Endothelial cell of umbilical vein (primary cell): ENCODE measurements at regions of chr17 and their contacts with region 1.

Region 1: DNA sequence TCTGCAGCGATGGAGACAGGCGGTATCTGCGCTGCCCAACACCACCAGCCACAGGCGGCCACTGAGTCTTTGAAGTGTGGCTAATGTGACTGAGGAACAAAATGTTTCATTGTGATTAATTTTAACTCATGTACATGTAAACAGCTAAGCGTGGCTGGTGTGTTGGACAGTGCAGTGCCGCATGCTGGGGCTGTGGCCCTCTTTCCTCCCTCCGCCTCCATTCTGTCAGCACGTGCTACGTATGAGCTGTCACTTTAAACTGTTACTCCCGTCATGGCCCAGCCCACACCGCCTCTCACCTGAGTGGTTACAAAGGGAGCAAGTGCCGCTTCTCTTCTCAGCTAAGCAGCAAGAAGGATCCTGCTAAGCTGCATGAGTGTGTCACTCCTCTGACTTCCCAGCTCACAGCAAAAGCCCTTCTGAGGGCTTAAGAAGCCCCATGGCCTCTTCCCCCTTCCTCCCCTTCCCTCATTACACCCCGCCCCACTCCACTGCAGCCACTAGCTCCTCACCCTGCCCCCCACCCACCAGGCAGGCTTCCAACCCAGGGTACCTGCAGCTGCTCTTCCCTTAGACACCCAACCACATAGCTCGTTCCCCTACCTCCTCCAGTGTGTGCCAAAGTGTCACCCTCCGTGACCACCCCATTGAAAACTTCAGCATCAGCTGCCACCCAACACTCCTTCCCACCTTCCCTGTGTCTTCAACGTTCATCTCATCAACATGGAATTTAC is 15.0 kb downstream of the HASPIN start:
- DNase-seq: no peak
- H3K4me3 ChIP-seq: no peak overlapping the region
- H3K27ac ChIP-seq: no peak overlapping the region
- H3K4me1 ChIP-seq: no peaks in the 10 kb centered on the region
- H3K27me3 ChIP-seq: peaks cover 0 to 5% of the 10 kb centered on the region in 2 experiments
- CTCF ChIP-seq: no peak
- POLR2A ChIP-seq: no peak

Region 2: GRCh38 chr17:3647769-3648555 is 90.8 kb before region 1 on chr17:
- CTCF ChIA-PET with region 1: no interaction called
- POLR2A ChIA-PET with region 1: no interaction called
- dilution Hi-C with region 1: no loop called
- intact Hi-C with region 1: no loop called
- DNase-seq: peak; percentile 47
- H3K4me3 ChIP-seq: no peak overlapping the region
- H3K27ac ChIP-seq: no peak overlapping the region
- H3K4me1 ChIP-seq: no peaks in the 10 kb centered on the region
- H3K27me3 ChIP-seq: no peaks in the 10 kb centered on the region
- CTCF ChIP-seq: peak; percentile 45 to 70
- POLR2A ChIP-seq: no peak

Region 3: DNA sequence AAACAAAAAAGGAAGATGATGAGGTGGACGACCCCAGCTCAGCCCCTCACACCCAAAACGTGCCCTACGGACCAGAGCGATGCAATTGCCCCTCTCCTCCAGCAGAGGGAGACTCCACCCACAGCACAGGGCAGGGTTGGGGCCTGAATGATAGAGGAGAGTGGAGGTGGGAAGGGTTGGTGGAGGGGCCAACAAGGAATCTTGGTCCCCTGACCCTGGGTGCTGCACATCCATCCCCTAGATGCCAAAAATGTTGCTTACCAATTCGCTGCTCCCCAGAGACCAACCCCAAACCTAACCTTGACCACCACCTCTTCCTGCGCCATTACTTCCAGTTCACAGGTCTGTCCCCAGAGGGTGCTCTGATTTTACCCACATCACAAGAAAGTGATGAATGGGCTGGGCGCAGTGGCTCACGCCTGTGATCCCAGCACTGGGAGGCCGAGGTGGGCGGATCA is 55.6 kb before region 1 on chr17:
- CTCF ChIA-PET with region 1: interaction called, 22 read pairs
- POLR2A ChIA-PET with region 1: no interaction called
- dilution Hi-C with region 1: no loop called
- intact Hi-C with region 1: no loop called
- DNase-seq: peak; percentile 31
- H3K4me3 ChIP-seq: no peak overlapping the region
- H3K27ac ChIP-seq: no peak overlapping the region
- H3K4me1 ChIP-seq: no peaks in the 10 kb centered on the region
- H3K27me3 ChIP-seq: peaks cover 0 to 7% of the 10 kb centered on the region in 2 experiments
- CTCF ChIP-seq: peak; percentile 93 to 96
- POLR2A ChIP-seq: no peak

Region 4: DNA sequence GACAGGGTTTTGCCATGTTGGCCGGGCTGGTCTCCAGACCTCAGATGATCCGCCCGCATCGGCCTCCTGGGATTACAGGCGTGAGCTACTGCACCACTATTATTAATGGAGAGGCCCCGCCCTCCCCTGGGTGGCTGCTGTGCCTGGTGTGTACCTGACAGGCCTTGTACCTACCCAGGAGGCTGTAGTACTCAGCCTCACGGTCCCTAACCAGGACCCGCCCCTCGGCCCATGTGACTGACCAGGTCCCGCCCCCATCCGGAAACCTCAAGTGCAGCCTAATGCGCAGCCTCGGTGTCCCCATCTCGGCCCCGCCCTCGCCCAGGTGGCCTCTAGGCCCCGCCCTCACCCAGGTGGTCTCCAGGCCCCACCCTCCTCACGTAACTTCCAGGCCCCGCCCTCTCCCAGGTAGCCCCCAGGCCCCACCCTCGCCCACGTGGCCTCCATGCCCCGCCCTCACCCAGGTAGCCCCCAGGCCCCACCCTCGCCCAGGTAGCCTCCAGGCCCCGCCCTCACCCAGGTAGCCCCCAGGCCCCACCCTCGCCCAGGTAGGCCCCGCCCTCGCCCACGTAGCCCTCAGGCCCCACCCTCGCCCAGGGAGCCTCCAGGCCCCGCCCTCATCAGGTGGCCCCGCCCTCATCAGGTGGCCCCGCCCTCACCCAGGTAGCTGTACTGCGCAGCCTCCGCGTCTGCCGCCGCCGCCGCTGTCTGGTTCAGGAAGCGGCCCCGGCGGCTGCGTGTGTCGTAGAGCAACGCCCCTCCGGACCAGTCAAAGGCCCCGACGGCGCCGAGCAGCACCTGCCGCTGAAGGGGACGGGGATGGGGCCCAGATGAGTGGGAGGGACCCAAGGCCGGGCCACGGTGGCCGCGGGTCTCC is 16.0 kb after region 1 on chr17:
- CTCF ChIA-PET with region 1: interaction called, 35 read pairs
- POLR2A ChIA-PET with region 1: interaction called, 3 read pairs
- dilution Hi-C with region 1: no loop called
- intact Hi-C with region 1: no loop called
- DNase-seq: no peak
- H3K4me3 ChIP-seq: no peak overlapping the region
- H3K27ac ChIP-seq: no peak overlapping the region
- H3K4me1 ChIP-seq: no peaks in the 10 kb centered on the region
- H3K27me3 ChIP-seq: no peaks in the 10 kb centered on the region
- CTCF ChIP-seq: no peak
- POLR2A ChIP-seq: no peak

Region 5: DNA sequence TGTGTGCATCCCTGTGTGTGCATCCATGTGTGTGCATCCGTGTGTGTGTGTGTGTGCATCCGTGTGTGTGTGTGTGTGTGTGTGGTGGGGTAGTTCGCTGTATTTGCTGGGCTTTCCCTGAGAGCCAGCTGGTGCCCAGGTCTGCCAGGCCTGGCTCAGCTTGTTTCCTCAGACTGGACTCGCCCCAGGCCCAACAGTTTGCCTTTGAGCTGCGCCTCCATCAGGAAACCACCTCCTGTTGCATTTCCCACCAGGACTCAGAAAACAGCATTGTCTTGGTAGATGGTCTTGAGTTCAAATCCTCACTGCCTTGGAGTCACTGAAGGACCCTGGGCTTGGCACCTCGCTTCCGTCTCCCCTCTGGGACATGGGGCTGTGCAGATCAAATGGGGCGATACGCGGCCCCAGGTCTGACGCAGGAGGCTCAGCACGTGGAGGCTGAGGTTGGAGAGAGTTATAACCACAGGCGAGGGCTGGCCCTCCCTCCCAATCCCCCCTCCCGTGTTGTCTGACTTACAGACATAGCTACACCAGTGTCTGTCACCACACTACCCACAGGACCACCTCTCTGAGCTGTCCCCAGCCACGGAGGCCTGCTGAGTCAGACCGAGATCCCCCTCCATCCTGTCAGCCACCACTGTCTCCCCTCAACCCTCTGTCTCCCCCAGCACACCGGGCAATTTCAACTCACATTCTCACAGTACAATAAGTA is 57.5 kb after region 1 on chr17:
- CTCF ChIA-PET with region 1: interaction called, 11 read pairs
- POLR2A ChIA-PET with region 1: no interaction called
- dilution Hi-C with region 1: no loop called
- intact Hi-C with region 1: loop called (anchors 2 kb)
- DNase-seq: no peak
- H3K4me3 ChIP-seq: no peak overlapping the region
- H3K27ac ChIP-seq: no peak overlapping the region
- H3K4me1 ChIP-seq: no peaks in the 10 kb centered on the region
- H3K27me3 ChIP-seq: no peaks in the 10 kb centered on the region
- CTCF ChIP-seq: no peak
- POLR2A ChIP-seq: no peak

Region 6: DNA sequence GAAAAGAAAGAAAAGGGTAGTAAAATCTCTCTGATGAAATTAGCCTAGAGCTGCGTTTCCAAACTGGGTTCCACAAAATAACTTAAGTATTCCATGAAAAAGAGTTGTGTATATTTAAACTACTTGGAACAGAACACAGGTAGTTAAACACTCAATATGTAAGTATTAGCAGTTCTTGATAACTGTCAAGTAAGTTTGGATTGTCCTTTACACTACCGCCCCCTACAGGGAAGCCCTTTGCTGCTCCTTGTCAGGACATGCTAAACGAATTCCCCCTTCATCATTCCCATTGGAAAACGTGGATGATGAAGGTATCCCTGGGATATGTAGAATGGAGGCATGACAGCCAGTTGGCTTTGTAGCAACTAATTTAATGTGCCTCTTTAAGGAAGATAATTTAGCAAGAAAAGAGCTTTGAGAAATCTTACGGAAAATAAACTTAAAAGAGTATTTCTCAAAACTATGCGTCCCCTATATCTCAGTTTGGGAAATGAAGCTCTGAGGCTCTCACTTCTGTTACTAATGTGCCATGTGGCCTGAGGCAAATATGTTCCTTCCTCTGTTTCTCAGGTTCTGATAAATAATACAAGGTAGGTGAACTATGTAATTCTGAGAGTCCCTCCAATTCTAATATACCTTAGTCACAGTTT is 88.5 kb after region 1 on chr17:
- CTCF ChIA-PET with region 1: interaction called, 112 read pairs
- POLR2A ChIA-PET with region 1: no interaction called
- dilution Hi-C with region 1: no loop called
- intact Hi-C with region 1: loop called (anchors 1 kb)
- DNase-seq: peak; percentile 79
- H3K4me3 ChIP-seq: no peak overlapping the region
- H3K27ac ChIP-seq: no peak overlapping the region
- H3K4me1 ChIP-seq: no peaks in the 10 kb centered on the region
- H3K27me3 ChIP-seq: no peaks in the 10 kb centered on the region
- CTCF ChIP-seq: peak; percentile 64 to 71
- POLR2A ChIP-seq: no peak

Region 7: GRCh38 chr17:4789901-4790704 is 1051.4 kb after region 1 on chr17:
- CTCF ChIA-PET with region 1: no interaction called
- POLR2A ChIA-PET with region 1: no interaction called
- dilution Hi-C with region 1: no loop called
- intact Hi-C with region 1: no loop called
- DNase-seq: peak; percentile 88
- H3K4me3 ChIP-seq: peak overlapping the region; percentile 10 to 65 (median 25)
- H3K27ac ChIP-seq: peak overlapping the region; percentile 14
- H3K4me1 ChIP-seq: peaks cover 24% of the 10 kb centered on the region
- H3K27me3 ChIP-seq: peaks cover 2 to 6% of the 10 kb centered on the region in 2 experiments
- CTCF ChIP-seq: peak; percentile 77 to 82
- POLR2A ChIP-seq: peak; percentile 88